Transverse colon (tissue), 4 donors: ENCODE measurements at regions of chr17 and their contacts with region 1.

Region 1: DNA sequence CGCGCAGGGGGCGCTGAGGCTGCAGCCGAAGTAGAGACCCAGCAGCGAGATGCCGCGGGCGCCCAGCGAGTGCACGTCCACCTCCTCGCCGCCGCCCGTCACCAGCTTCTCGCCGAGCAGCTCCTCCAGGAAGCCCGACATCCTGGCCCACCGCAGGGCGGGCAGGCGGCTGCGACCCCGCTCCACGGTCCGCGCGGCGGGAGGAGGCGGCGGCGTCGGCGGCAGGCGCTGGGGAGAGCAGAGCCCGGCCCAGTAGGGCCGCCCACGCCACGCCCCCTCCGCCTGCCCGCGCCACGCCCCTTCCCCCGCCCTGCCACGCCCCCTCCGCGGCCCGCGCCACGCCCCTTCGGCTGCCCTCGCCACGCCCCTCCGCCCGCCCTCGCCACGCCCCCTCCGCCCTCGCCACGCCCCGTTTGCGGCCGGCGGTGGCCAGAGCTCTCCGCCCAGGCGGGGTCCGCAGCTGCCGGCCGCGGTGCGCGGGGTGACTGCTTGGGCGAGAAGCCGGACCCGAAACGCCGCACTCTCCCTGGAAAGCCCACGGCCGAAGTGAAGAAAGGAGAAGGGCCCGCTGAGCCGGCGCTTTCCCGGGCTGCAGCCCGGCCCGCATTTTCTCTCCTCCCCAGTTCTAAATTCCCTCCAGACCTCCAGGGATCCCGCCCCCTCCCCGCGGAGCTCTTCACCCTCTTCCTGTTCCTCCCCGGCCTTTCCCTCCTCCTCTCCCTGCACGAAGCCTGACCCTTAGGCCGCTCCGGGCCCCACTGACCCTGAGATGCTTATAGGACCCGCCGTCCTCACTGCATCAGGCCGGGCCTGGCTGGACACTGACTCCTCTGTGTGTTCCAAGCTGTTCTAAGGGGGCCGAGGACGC is at the start of gene NXN:
- DNase-seq: peak; percentile 92
- H3K4me3 ChIP-seq: peak within 1 kb of the TSS; percentile 56 to 84 (median 68)
- H3K27ac ChIP-seq: peak within 1 kb of the TSS; percentile 80 to 91 (median 90)
- H3K4me1 ChIP-seq: peaks cover 0 to 37% (median 20%) of the 10 kb centered on the region in 4 donors
- H3K27me3 ChIP-seq: peaks cover 34% of the 10 kb centered on the region
- CTCF ChIP-seq: no peak
- EP300 ChIP-seq: no peak
- POLR2A ChIP-seq: peak; percentile 27
- total RNA-seq, gene NXN: 10.6 to 222 (median 13.8) TPM

Region 2: GRCh38 chr17:781805-782731 is 197.7 kb before region 1 on chr17 and contains the starts of genes GLOD4 and MRM3:
- in situ Hi-C with region 1: loop called in 2 of 4 experiments (anchors 10 kb)
- intact Hi-C with region 1: no loop called
- DNase-seq: peak; percentile 95
- H3K4me3 ChIP-seq: peak within 1 kb of the TSS; percentile 59 to 93 (median 74)
- H3K27ac ChIP-seq: peak within 1 kb of the TSS; percentile 85 to 94 (median 86)
- H3K4me1 ChIP-seq: peaks cover 6 to 24% (median 15%) of the 10 kb centered on the region in 4 donors
- H3K27me3 ChIP-seq: no peaks in the 10 kb centered on the region
- CTCF ChIP-seq: peak in 4 of 5 experiments; percentile 10 to 73 (median 40)
- EP300 ChIP-seq: no peak
- POLR2A ChIP-seq: peak; percentile 74
- total RNA-seq, gene GLOD4: 65.5 to 124 (median 73.7) TPM
- total RNA-seq, gene MRM3: 1.00 to 13.4 (median 12.5) TPM in 3 of 4 donors, not detected in the other

Region 3: GRCh38 chr17:794876-795275 is 184.9 kb before region 1 on chr17:
- in situ Hi-C with region 1: loop called in 2 of 4 experiments (anchors 10 kb)
- intact Hi-C with region 1: loop called (anchors 1 kb)
- DNase-seq: peak; percentile 80
- H3K4me3 ChIP-seq: peak overlapping the region in 1 of 4 donors; percentile 33
- H3K27ac ChIP-seq: peak overlapping the region; percentile 19 to 74 (median 65)
- H3K4me1 ChIP-seq: peaks cover 0 to 13% (median 9%) of the 10 kb centered on the region in 4 donors
- H3K27me3 ChIP-seq: no peaks in the 10 kb centered on the region
- CTCF ChIP-seq: peak; percentile 72 to 89 (median 78)
- EP300 ChIP-seq: no peak
- POLR2A ChIP-seq: no peak

Region 4: DNA sequence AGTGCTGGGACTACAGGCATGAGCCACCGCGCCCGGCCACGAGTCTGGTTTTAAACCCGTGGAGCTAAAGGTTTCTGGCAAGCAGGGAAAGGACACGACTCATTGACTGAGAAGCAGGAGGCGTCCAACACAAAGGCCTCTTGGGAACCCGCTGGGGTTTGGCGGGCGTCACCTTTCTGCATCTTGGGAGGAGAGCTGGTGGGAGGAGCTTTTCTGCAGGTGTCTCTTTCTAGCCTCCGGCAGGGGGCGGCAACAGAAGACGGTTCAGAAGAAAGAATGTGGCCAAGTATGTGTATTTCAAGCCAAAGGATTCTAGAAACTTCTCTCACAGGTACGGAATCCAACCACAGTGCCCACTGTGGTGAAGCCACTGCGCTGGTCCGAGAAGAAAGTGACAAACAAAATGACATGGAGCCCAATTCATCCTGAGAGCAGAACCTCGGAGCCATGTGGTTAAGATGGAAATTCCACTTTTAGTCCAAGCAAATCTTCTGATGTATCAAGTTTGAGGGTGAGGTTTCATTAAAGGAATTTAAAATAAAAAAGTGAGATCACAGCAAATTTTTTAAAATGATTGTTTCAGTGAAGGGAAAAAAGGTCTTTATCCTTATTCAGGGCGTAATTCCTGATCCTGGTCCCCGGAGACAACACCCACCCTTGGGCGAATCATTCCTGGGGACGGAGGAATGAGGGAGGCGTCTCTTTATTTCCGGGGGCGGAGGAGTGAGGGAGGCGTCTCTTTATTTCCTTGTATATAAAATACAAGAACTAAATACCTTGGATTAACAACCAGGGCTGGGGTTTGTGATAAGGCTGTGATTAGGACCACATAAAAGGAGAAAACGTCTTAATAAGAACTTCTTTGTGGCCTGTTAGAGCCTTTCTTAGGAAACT is 100.0 kb before region 1 on chr17:
- in situ Hi-C with region 1: no loop called
- intact Hi-C with region 1: loop called (anchors 10 kb)
- DNase-seq: peak; percentile 71
- H3K4me3 ChIP-seq: no peak overlapping the region
- H3K27ac ChIP-seq: peak overlapping the region; percentile 46 to 89 (median 85)
- H3K4me1 ChIP-seq: peaks cover 21 to 42% (median 26%) of the 10 kb centered on the region in 4 donors
- H3K27me3 ChIP-seq: no peaks in the 10 kb centered on the region
- CTCF ChIP-seq: peak; percentile 40 to 53 (median 48)
- EP300 ChIP-seq: no peak
- POLR2A ChIP-seq: no peak

Region 5: GRCh38 chr17:915538-916201 is 64.1 kb before region 1 on chr17:
- in situ Hi-C with region 1: no loop called
- intact Hi-C with region 1: loop called (anchors 10 kb)
- DNase-seq: no peak
- H3K4me3 ChIP-seq: no peak overlapping the region
- H3K27ac ChIP-seq: peak overlapping the region; percentile 37 to 72 (median 54)
- H3K4me1 ChIP-seq: peaks cover 3 to 16% (median 6%) of the 10 kb centered on the region in 4 donors
- H3K27me3 ChIP-seq: no peaks in the 10 kb centered on the region
- CTCF ChIP-seq: no peak
- EP300 ChIP-seq: no peak
- POLR2A ChIP-seq: no peak

Region 6: GRCh38 chr17:1179818-1180742 is 200.3 kb after region 1 on chr17 and contains the start of gene ABR:
- in situ Hi-C with region 1: no loop called
- intact Hi-C with region 1: no loop called
- DNase-seq: peak; percentile 46
- H3K4me3 ChIP-seq: peak within 1 kb of the TSS; percentile 54 to 90 (median 86)
- H3K27ac ChIP-seq: peak within 1 kb of the TSS; percentile 59 to 67 (median 64)
- H3K4me1 ChIP-seq: peaks cover 14 to 39% (median 19%) of the 10 kb centered on the region in 4 donors
- H3K27me3 ChIP-seq: no peaks in the 10 kb centered on the region
- CTCF ChIP-seq: no peak
- EP300 ChIP-seq: no peak
- POLR2A ChIP-seq: peak; percentile 20
- total RNA-seq, gene ABR: 286 to 1,099 (median 522) TPM